Naive thymus-derived CD4-positive, alpha-beta T cell (primary cell): ENCODE measurements at regions of chr5 and their contacts with region 1.

Region 1: DNA sequence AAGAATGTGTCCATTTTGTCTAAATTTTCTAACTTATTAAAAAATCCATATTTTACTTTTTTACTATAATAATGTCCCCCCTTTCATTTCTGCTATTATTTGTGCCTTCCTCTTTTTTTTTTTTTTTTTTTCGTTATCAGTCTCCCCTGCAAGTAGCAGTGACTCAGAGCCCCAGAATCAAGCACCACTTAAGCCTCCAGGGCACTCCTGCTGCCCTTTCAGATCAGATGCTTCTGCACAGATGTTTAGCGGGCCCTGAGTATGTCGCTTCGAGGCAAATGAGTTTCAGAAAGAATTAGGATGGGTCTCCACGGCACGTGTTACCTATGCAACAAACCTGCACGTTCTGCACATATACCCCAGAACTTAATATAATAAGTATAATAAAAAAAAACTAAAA is 11.7 kb downstream of the MED7 start:
- DNase-seq: no peak
- ATAC-seq: no peak
- H3K4me3 ChIP-seq: no peak overlapping the region
- H3K4me3 Mint-ChIP-seq: no peak overlapping the region
- H3K27ac ChIP-seq: no peak overlapping the region
- H3K27ac Mint-ChIP-seq: no peak overlapping the region
- H3K4me1 ChIP-seq: no peaks in the 10 kb centered on the region
- H3K4me1 Mint-ChIP-seq: peaks cover 6 to 46% (median 26%) of the 10 kb centered on the region in 7 donors
- H3K27me3 ChIP-seq: no peaks in the 10 kb centered on the region
- H3K27me3 Mint-ChIP-seq: no peaks in the 10 kb centered on the region

Region 2: GRCh38 chr5:155616779-155617392 is 1514.0 kb before region 1 on chr5:
- CTCF ChIA-PET with region 1: interaction called, 3 read pairs
- POLR2A ChIA-PET with region 1: no interaction called
- intact Hi-C with region 1: loop called in 1 of 2 experiments (anchors 1 kb)
- DNase-seq: peak in 8 of 9 donors; percentile 10 to 54 (median 18)
- ATAC-seq: peak; percentile 50
- H3K4me3 ChIP-seq: no peak overlapping the region
- H3K4me3 Mint-ChIP-seq: no peak overlapping the region
- H3K27ac ChIP-seq: no peak overlapping the region
- H3K27ac Mint-ChIP-seq: no peak overlapping the region
- H3K4me1 ChIP-seq: no peaks in the 10 kb centered on the region
- H3K4me1 Mint-ChIP-seq: peaks cover 0 to 4% (median 0%) of the 10 kb centered on the region in 7 donors
- H3K27me3 ChIP-seq: no peaks in the 10 kb centered on the region
- H3K27me3 Mint-ChIP-seq: peaks cover 12 to 41% (median 26%) of the 10 kb centered on the region in 5 donors

Region 3: GRCh38 chr5:155655569-155655968 is 1475.4 kb before region 1 on chr5:
- CTCF ChIA-PET with region 1: no interaction called
- POLR2A ChIA-PET with region 1: no interaction called
- intact Hi-C with region 1: no loop called
- DNase-seq: no peak
- ATAC-seq: no peak
- H3K4me3 ChIP-seq: no peak overlapping the region
- H3K4me3 Mint-ChIP-seq: no peak overlapping the region
- H3K27ac ChIP-seq: no peak overlapping the region
- H3K27ac Mint-ChIP-seq: no peak overlapping the region
- H3K4me1 ChIP-seq: no peaks in the 10 kb centered on the region
- H3K4me1 Mint-ChIP-seq: no peaks in the 10 kb centered on the region
- H3K27me3 ChIP-seq: no peaks in the 10 kb centered on the region
- H3K27me3 Mint-ChIP-seq: peaks cover 0 to 19% (median 16%) of the 10 kb centered on the region in 5 donors

Region 4: DNA sequence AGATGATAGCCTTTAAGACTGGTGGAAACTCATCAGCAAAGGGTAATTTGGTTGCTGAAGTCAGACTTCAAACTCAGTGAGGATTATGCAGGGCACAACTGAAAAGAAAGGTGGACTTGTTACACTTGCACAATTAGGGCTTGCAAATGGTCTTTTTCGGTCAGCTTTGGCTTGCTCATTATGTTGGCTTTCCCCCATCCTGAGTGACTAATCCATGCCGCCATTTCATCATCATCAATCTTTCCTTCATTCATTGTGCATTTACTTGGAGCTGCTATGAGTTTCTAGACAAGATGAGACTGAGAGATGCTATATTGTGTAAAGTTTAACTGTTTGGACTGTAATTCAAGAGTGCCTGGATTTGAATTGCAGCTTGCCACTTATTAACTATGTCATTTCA is 415.6 kb before region 1 on chr5:
- CTCF ChIA-PET with region 1: no interaction called
- POLR2A ChIA-PET with region 1: no interaction called
- intact Hi-C with region 1: loop called in 1 of 2 experiments (anchors 10 kb)
- DNase-seq: no peak
- ATAC-seq: no peak
- H3K4me3 ChIP-seq: no peak overlapping the region
- H3K4me3 Mint-ChIP-seq: no peak overlapping the region
- H3K27ac ChIP-seq: no peak overlapping the region
- H3K27ac Mint-ChIP-seq: no peak overlapping the region
- H3K4me1 ChIP-seq: no peaks in the 10 kb centered on the region
- H3K4me1 Mint-ChIP-seq: no peaks in the 10 kb centered on the region
- H3K27me3 ChIP-seq: no peaks in the 10 kb centered on the region
- H3K27me3 Mint-ChIP-seq: peaks cover 10 to 26% (median 15%) of the 10 kb centered on the region in 5 donors

Region 5: DNA sequence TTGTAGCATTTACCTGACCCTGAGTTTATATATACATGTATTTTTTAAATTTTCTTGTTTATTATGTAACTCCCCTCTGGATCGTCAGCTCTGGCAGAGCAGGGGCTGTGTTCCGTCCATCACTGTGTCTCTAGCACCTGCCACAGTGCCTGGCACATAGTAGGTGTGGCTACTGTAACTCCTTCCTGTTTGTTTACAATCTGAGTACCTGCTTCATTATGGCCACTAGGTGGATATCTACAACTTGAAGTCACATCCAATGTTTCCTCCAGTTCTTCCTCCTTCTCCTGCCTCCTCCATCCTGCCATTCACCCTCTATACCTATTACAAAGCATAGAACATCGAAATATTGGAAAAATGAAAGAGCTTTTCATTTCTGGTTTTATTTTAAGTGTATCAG is 295.0 kb before region 1 on chr5:
- CTCF ChIA-PET with region 1: interaction called, 3 read pairs
- POLR2A ChIA-PET with region 1: no interaction called
- intact Hi-C with region 1: loop called in 1 of 2 experiments (anchors 5 kb)
- DNase-seq: no peak
- ATAC-seq: no peak
- H3K4me3 ChIP-seq: no peak overlapping the region
- H3K4me3 Mint-ChIP-seq: no peak overlapping the region
- H3K27ac ChIP-seq: no peak overlapping the region
- H3K27ac Mint-ChIP-seq: no peak overlapping the region
- H3K4me1 ChIP-seq: no peaks in the 10 kb centered on the region
- H3K4me1 Mint-ChIP-seq: peaks cover 0 to 9% (median 0%) of the 10 kb centered on the region in 7 donors
- H3K27me3 ChIP-seq: no peaks in the 10 kb centered on the region
- H3K27me3 Mint-ChIP-seq: no peaks in the 10 kb centered on the region

Region 6: DNA sequence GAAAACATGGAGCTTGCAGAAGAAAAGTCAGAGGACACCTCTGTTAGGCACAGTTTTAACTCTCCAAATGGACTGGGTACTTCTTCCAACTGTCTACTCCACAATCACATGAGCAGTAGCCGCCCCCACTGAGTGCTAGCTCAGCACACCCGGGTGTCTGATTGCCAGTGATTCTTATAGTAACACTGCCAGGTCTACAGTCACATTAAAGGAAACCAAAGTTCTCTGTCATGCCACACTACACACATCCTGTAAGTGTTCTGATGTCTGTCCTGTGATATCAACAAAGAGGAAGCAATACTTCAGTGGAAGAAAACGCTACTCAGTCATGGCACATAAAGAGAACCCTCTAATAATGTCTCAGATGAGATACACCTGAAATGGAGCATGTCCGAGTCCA is 21.9 kb before region 1 on chr5 and contains the start of gene HAVCR2:
- CTCF ChIA-PET with region 1: interaction called, 3 read pairs
- POLR2A ChIA-PET with region 1: no interaction called
- intact Hi-C with region 1: loop called in 1 of 2 experiments (anchors 1 kb)
- DNase-seq: peak; percentile 20 to 73 (median 57)
- ATAC-seq: peak; percentile 90
- H3K4me3 ChIP-seq: peak within 1 kb of the TSS; percentile 27
- H3K4me3 Mint-ChIP-seq: peak within 1 kb of the TSS; percentile 81 to 97 (median 85)
- H3K27ac ChIP-seq: peak within 1 kb of the TSS; percentile 55
- H3K27ac Mint-ChIP-seq: peak within 1 kb of the TSS; percentile 82 to 96 (median 92)
- H3K4me1 ChIP-seq: peaks cover 19 to 22% of the 10 kb centered on the region in 2 donors
- H3K4me1 Mint-ChIP-seq: peaks cover 16 to 68% (median 47%) of the 10 kb centered on the region in 7 donors
- H3K27me3 ChIP-seq: no peaks in the 10 kb centered on the region
- H3K27me3 Mint-ChIP-seq: no peaks in the 10 kb centered on the region
- total RNA-seq, gene HAVCR2: 5.1 to 110 (median 5.5) TPM